ENCODE measurements at regions of chr7 and their contacts with region 1.

Region 1: DNA sequence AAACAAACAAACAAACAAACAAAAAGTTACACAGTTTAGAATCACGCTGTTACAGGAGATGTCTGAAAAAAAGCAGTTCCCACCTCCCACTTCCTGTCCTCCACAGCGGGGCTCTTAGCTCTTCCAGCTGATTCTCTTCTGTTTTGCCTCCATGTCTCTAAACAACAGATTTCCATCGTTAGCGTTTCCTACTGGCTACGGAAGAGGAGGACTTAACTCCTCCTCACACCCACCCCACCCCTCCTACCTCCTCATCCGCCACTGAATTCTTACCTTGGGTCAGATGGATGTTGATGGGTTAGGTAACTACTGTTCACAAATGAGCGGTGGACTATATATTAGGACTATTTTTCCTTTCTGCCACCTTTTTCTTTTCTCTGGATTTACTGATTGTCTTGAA is 36.8 kb upstream of the NUB1 start:
- DNase-seq: no peak
- ATAC-seq: no peak
- H3K4me3 ChIP-seq: no peak overlapping the region
- H3K27ac ChIP-seq: no peak overlapping the region
- H3K4me1 ChIP-seq: peaks cover 0 to 8% of the 10 kb centered on the region in 2 experiments; a peak in 1 of 4 replicates
- H3K27me3 ChIP-seq: no peaks in the 10 kb centered on the region
- CTCF ChIP-seq: no peak
- POLR2A ChIP-seq: no peak
- RAD21 ChIP-seq: no peak

Region 2: GRCh38 chr7:150448789-150449147 is 856.1 kb before region 1 on chr7:
- CTCF ChIA-PET with region 1: no interaction called
- POLR2A ChIA-PET with region 1: no interaction called
- RAD21 ChIA-PET with region 1: no interaction called
- intact Hi-C with region 1: loop called (anchors 5 kb)
- DNase-seq: peak; percentile 48
- ATAC-seq: peak; percentile 95
- H3K4me3 ChIP-seq: no peak overlapping the region
- H3K27ac ChIP-seq: no peak overlapping the region
- H3K4me1 ChIP-seq: no peaks in the 10 kb centered on the region
- H3K27me3 ChIP-seq: no peaks in the 10 kb centered on the region
- CTCF ChIP-seq: peak; percentile 73 to 96 (median 90)
- POLR2A ChIP-seq: no peak
- RAD21 ChIP-seq: peak; percentile 89

Region 3: GRCh38 chr7:151123822-151124464 is 180.9 kb before region 1 on chr7:
- CTCF ChIA-PET with region 1: interaction called, 3 read pairs
- POLR2A ChIA-PET with region 1: no interaction called
- RAD21 ChIA-PET with region 1: no interaction called
- intact Hi-C with region 1: loop called (anchors 1 kb)
- DNase-seq: peak; percentile 66
- ATAC-seq: peak; percentile 95
- H3K4me3 ChIP-seq: no peak overlapping the region
- H3K27ac ChIP-seq: no peak overlapping the region; the same call in 1 of the 2 replicates
- H3K4me1 ChIP-seq: peaks cover 0 to 8% of the 10 kb centered on the region in 2 experiments; a peak in 1 of 4 replicates
- H3K27me3 ChIP-seq: no peaks in the 10 kb centered on the region
- CTCF ChIP-seq: peak; percentile 99
- POLR2A ChIP-seq: no peak
- RAD21 ChIP-seq: peak; percentile 93

Region 4: DNA sequence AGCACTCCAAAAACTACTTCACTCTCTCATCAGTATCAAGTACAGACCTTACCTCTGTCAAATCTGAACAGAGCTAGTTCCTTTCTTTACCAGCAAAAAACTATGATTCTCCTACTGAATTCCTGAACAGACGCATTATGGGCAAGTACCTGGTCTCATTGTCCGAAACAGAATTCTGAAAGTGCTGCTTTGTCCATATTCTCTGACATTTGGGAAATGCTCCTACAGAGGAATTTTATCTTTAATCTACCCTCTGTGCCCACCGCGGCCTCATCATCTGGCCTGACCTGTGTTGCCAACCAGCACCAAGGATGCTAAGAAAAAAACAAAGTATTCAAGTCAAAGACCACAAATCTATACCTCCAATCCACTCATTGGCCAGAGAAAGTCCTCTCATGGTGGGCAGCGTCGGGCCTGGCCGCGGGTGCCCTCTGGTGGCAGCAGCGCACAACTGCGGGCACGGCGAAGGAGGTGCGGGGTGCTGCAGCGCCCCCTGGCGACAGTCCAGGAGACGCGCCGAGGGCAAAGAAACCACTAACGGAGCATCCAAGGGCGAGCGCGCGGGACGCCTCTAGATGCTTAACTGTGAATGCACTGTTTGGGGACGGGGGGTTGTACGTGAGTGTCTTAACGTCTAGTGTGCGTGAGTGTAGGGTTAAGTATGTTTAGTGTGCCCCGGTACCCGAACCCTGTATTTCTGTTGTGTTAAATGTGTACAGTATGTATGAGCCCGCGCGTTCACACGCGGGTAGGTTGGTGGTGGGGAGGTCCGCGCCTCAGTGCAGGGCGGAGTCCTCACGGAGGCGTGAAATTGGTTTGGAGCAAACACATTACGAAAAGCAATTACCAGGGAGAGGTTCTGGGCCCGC is 132.3 kb before region 1 on chr7:
- CTCF ChIA-PET with region 1: no interaction called
- POLR2A ChIA-PET with region 1: no interaction called
- RAD21 ChIA-PET with region 1: no interaction called
- intact Hi-C with region 1: loop called (anchors 2 kb)
- DNase-seq: peak; percentile 61
- ATAC-seq: peak; percentile 63
- H3K4me3 ChIP-seq: no peak overlapping the region
- H3K27ac ChIP-seq: no peak overlapping the region
- H3K4me1 ChIP-seq: peaks cover 0 to 5% of the 10 kb centered on the region in 2 experiments; a peak in 1 of 4 replicates
- H3K27me3 ChIP-seq: no peaks in the 10 kb centered on the region
- CTCF ChIP-seq: peak; percentile 100
- POLR2A ChIP-seq: no peak
- RAD21 ChIP-seq: peak; percentile 98

Region 5: GRCh38 chr7:151244196-151244840 is 60.5 kb before region 1 on chr7:
- CTCF ChIA-PET with region 1: interaction called, 4 read pairs
- POLR2A ChIA-PET with region 1: no interaction called
- RAD21 ChIA-PET with region 1: no interaction called
- intact Hi-C with region 1: loop called (anchors 1 kb)
- DNase-seq: no peak
- ATAC-seq: no peak
- H3K4me3 ChIP-seq: no peak overlapping the region
- H3K27ac ChIP-seq: no peak overlapping the region; the same call in 1 of the 2 replicates
- H3K4me1 ChIP-seq: peaks cover 21 to 47% of the 10 kb centered on the region in 2 experiments
- H3K27me3 ChIP-seq: no peaks in the 10 kb centered on the region
- CTCF ChIP-seq: peak in 2 of 3 experiments; percentile 96 to 97; a peak in 4 of 6 replicates
- POLR2A ChIP-seq: no peak
- RAD21 ChIP-seq: no peak

Measured in HCT116 (cell line).